Activated B cell treated with CpG ODN at 0.5 μM for 24 hours (primary cell): ENCODE measurements at regions of chr17 and their contacts with region 1.

Region 1: GRCh38 chr17:78708510-78708973 is 73.5 kb downstream of the CYTH1 start:
- DNase-seq: no peak
- ATAC-seq: peak; percentile 55
- H3K4me3 Mint-ChIP-seq: peak overlapping the region; percentile 69
- H3K27ac Mint-ChIP-seq: peak overlapping the region; percentile 93
- H3K4me1 Mint-ChIP-seq: peaks cover 90% of the 10 kb centered on the region
- H3K27me3 Mint-ChIP-seq: no peaks in the 10 kb centered on the region
- CTCF ChIP-seq: no peak

Region 2: GRCh38 chr17:78448356-78448993 is 260.1 kb before region 1 on chr17:
- CTCF ChIA-PET with region 1: no interaction called
- POLR2A ChIA-PET with region 1: no interaction called
- intact Hi-C with region 1: loop called (anchors 2 kb)
- DNase-seq: no peak
- ATAC-seq: no peak
- H3K4me3 Mint-ChIP-seq: no peak overlapping the region
- H3K27ac Mint-ChIP-seq: no peak overlapping the region
- H3K4me1 Mint-ChIP-seq: peaks cover 8% of the 10 kb centered on the region
- H3K27me3 Mint-ChIP-seq: peaks cover 5% of the 10 kb centered on the region
- CTCF ChIP-seq: no peak

Region 3: GRCh38 chr17:78697554-78698343 is 10.8 kb before region 1 on chr17:
- CTCF ChIA-PET with region 1: interaction called, 26 read pairs
- POLR2A ChIA-PET with region 1: interaction called, 19 read pairs
- intact Hi-C with region 1: loop called (anchors 1 kb)
- DNase-seq: no peak
- ATAC-seq: peak; percentile 73
- H3K4me3 Mint-ChIP-seq: peak overlapping the region; percentile 25
- H3K27ac Mint-ChIP-seq: peak overlapping the region; percentile 80
- H3K4me1 Mint-ChIP-seq: peaks cover 54% of the 10 kb centered on the region
- H3K27me3 Mint-ChIP-seq: no peaks in the 10 kb centered on the region
- CTCF ChIP-seq: no peak

Region 4: GRCh38 chr17:78736526-78737079 is 28.1 kb after region 1 on chr17:
- CTCF ChIA-PET with region 1: interaction called, 52 read pairs
- POLR2A ChIA-PET with region 1: interaction called, 396 read pairs
- intact Hi-C with region 1: loop called (anchors 1 kb)
- DNase-seq: peak; percentile 57
- ATAC-seq: peak; percentile 51
- H3K4me3 Mint-ChIP-seq: peak overlapping the region; percentile 92
- H3K27ac Mint-ChIP-seq: peak overlapping the region; percentile 90
- H3K4me1 Mint-ChIP-seq: peaks cover 81% of the 10 kb centered on the region
- H3K27me3 Mint-ChIP-seq: no peaks in the 10 kb centered on the region
- CTCF ChIP-seq: no peak

Region 5: GRCh38 chr17:78769196-78769773 is 60.7 kb after region 1 on chr17:
- CTCF ChIA-PET with region 1: interaction called, 3 read pairs
- POLR2A ChIA-PET with region 1: interaction called, 12 read pairs
- intact Hi-C with region 1: no loop called
- DNase-seq: no peak
- ATAC-seq: no peak
- H3K4me3 Mint-ChIP-seq: no peak overlapping the region
- H3K27ac Mint-ChIP-seq: no peak overlapping the region
- H3K4me1 Mint-ChIP-seq: peaks cover 47% of the 10 kb centered on the region
- H3K27me3 Mint-ChIP-seq: no peaks in the 10 kb centered on the region
- CTCF ChIP-seq: no peak

Region 6: DNA sequence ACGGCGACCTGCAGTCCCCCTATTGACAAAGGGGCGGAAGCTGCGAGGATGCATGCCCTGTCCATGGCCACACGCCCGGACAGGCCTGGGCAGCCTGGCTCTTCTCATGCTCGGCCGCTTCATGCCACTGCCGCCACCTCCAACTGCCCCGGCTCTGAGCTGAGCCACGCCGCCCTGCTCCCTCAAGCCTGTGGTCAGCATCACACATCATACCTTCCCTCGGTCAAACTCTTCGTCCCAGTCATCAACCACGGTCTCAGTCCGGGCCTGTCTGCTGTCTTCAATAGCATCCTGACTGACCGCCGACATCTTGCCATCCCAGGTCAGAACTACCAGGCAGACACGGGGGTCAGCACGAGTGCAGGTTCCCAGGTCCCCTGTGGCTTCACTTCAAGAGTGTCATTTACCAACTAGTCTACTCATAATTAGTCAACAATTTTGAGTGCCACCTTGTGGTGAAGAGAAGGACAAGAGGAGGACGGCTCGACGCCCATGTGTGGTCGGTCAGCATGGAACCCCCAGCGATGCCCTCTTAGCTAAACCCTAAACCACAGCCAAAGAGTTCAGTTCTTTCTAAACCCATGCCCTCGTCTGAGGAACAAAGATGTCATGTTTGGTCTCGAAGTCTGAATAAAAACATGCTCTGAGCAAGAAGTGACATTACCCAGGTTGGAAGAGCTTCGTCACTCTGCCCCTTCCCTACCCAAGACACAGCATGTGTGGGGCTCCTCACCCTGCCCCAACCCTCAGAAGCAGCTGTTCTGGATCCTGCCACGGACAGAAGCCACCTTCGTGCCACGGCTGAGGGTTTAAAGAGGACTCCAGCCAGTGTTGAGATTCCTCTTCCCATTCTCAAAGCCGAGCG is 90.4 kb after region 1 on chr17:
- CTCF ChIA-PET with region 1: interaction called, 18 read pairs
- POLR2A ChIA-PET with region 1: interaction called, 4 read pairs
- intact Hi-C with region 1: loop called (anchors 1 kb)
- DNase-seq: no peak
- ATAC-seq: peak; percentile 61
- H3K4me3 Mint-ChIP-seq: no peak overlapping the region
- H3K27ac Mint-ChIP-seq: peak overlapping the region; percentile 50
- H3K4me1 Mint-ChIP-seq: peaks cover 10% of the 10 kb centered on the region
- H3K27me3 Mint-ChIP-seq: no peaks in the 10 kb centered on the region
- CTCF ChIP-seq: no peak

Region 7: DNA sequence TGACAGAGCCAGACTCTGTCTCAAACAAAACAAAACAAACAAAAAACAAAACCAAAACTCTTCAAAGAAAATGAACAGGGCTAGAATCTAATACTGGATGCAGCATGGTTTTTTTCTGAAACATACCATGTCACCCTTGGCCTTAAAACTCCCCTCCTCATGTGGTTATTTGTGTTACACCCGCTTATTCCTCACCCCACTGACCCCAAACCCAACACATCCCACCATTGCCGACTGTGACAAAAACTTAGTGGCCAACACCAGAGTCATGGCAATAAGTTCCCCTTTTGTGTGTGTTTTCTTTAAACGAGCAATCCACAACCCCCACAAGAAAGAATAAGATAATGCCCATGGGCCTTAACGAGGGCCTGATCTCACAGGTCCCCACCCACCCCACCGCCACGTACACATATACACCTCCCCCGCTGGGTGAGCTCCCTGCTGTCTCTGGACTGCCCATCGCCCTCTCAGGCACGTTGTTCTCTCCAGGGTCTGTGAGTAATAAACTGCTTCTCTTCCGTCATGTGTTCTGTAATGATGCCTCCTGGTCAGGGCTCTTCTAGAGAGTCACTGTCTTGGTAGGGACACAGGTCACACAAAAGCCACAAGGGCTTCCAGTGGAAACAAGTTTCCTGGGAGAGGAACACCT is 349.3 kb after region 1 on chr17:
- CTCF ChIA-PET with region 1: no interaction called
- POLR2A ChIA-PET with region 1: no interaction called
- intact Hi-C with region 1: no loop called
- DNase-seq: no peak
- ATAC-seq: no peak
- H3K4me3 Mint-ChIP-seq: no peak overlapping the region
- H3K27ac Mint-ChIP-seq: no peak overlapping the region
- H3K4me1 Mint-ChIP-seq: peaks cover 1% of the 10 kb centered on the region
- H3K27me3 Mint-ChIP-seq: peaks cover 10% of the 10 kb centered on the region
- CTCF ChIP-seq: no peak